ENCODE measurements at regions of chr10 and their contacts with region 1.

Region 1: GRCh38 chr10:88687853-88688467 is 18.1 kb upstream of the LIPK start:
- DNase-seq: no peak
- H3K4me3 ChIP-seq: no peak overlapping the region
- H3K27ac ChIP-seq: no peak overlapping the region
- H3K4me1 ChIP-seq: no peaks in the 10 kb centered on the region
- H3K27me3 ChIP-seq: no peaks in the 10 kb centered on the region
- CTCF ChIP-seq: peak; percentile 57 to 78 (median 68)
- POLR2A ChIP-seq: no peak

Region 2: DNA sequence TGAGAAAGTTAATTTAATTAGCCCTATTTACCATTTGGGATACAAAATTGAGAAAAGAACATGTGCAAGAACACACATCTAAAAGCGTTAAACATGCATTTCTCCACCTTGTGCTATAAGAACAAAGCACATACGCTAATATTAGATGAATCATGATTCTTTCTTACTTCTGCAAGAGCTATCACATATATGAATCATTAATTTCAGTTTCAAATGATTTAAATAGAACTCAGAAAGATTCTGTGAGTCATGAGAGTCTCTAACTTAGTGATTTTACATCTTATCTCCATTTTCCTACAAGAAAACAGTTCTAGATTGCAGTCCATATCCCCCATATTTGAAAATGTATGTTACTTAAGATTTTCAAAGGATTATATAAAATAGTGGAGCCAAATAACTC is 278.7 kb before region 1 on chr10:
- intact Hi-C with region 1: no loop called
- DNase-seq: no peak
- H3K4me3 ChIP-seq: no peak overlapping the region
- H3K27ac ChIP-seq: no peak overlapping the region
- H3K4me1 ChIP-seq: no peaks in the 10 kb centered on the region
- H3K27me3 ChIP-seq: no peaks in the 10 kb centered on the region
- CTCF ChIP-seq: no peak
- POLR2A ChIP-seq: no peak

Region 3: DNA sequence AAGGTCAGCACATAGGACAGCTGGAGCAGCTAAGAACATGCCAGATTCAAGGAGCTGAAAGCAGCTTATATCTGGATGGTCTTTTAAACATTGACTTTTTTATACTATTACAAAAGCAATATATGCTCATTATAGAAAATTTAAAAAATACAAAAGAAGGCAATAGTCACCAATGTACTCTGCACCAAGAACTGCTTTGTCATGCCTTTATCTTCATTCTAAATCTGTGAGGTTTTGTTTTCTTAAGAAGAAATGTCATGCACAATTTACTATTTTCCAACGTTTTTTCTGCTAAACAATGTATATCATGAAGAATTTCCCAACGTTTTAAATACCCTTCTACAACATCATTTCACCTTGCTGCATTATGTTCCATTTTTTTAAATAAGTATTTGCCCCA is 117.4 kb after region 1 on chr10:
- intact Hi-C with region 1: loop called (anchors 5 to 10 kb)
- DNase-seq: no peak
- H3K4me3 ChIP-seq: no peak overlapping the region
- H3K27ac ChIP-seq: no peak overlapping the region
- H3K4me1 ChIP-seq: no peaks in the 10 kb centered on the region
- H3K27me3 ChIP-seq: no peaks in the 10 kb centered on the region
- CTCF ChIP-seq: no peak
- POLR2A ChIP-seq: no peak

Region 4: DNA sequence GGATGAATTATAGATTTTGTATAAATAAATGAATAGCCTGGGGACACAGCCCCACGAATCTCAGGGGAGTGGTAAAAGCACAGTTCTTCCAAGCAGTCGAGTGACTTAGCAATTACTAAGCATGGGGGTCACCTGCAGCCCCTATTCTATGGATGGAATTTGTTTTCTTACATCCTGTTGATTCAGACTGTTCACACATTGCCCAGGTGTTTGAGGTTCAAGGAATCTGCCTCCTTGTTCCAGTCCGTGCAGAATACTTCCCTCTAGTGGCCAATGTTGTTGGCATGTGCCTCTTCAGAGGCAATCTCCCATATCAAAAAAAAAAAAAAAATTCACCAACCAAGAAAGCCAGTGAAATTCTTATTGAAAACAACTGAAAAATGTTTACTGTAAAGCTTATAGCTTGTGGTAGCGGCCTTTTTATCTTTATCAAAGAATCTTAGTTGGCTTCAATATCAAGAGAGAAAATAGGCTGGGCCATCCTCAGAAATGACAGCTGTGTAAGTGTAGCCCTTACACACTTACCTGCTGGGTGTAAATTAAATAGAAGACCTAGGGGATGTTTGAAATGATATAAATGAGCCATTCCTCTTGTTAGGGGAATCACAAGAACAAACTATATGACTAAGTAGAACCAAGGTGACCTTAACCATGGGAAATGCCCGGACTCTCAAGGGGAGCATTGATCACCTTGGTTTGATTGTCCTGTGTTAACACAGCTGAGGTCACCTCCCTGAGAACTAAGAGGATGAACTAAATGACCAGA is 122.4 kb after region 1 on chr10:
- intact Hi-C with region 1: loop called (anchors 5 to 10 kb)
- DNase-seq: peak; percentile 22 to 63 (median 46)
- H3K4me3 ChIP-seq: no peak overlapping the region
- H3K27ac ChIP-seq: no peak overlapping the region
- H3K4me1 ChIP-seq: no peaks in the 10 kb centered on the region
- H3K27me3 ChIP-seq: no peaks in the 10 kb centered on the region
- CTCF ChIP-seq: peak; percentile 51 to 73 (median 64)
- POLR2A ChIP-seq: no peak

Region 5: DNA sequence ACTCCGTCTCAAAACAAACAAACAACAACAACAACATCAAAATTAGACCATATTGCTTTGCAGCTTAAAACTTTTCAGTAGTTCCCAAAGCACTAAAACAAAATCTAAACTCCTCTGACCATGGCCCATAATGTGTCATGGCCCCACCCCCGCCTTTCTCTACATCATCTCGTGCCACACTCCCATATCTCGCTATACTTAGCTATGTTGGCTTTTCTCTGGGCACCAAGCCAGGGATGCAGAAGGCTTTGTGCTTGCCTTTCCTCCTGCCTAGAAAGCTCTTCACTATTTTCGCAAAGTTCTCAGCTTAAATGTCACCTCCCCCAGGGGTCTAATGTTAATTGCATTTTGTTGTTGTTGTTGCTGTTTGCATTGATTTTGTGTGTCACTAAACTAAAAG is 862.5 kb after region 1 on chr10:
- intact Hi-C with region 1: no loop called
- DNase-seq: no peak
- H3K4me3 ChIP-seq: no peak overlapping the region
- H3K27ac ChIP-seq: no peak overlapping the region
- H3K4me1 ChIP-seq: peaks cover 0 to 3% of the 10 kb centered on the region in 2 donors
- H3K27me3 ChIP-seq: no peaks in the 10 kb centered on the region
- CTCF ChIP-seq: no peak
- POLR2A ChIP-seq: no peak